ENCODE measurements at regions of chr11 and their contacts with region 1.

Region 1: DNA sequence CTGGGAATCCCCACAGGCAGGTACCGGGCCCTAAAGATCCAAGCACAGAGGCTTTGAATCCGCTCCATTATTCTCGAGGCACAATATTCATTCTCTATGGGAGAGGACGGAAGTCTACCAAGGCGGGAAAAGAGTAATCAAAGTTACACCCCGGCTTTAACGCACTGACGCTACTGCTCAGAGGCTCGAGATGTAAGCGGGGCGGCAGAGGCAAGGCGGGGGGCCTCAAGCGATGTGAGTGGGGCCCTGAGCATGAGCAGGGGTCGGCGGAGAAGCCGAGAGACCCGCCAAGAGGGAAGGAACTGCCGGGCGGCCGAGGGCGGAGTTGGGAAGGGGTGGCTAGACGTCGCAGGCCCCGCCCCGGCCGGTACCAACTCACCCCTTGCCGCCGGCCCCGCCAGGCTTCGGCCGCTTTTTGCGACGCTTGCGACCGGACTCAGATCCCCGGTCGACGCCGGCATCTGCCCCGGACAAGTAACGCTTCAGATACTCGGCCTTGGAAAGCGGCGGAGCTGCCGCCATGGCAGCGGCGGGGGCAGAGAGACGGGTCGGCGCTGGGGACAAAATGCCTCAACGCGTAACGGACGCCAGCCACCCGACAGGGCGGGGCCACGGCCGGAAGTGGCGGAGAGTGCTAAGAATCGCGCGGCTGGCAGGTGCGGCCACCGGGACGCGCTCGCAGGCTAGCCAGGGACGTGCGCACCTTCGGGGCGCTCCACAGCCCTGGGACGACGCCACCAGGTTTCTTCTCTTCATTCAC is at the start of gene BUD13:
- DNase-seq: peak; percentile 94
- ATAC-seq: peak; percentile 86
- H3K4me3 ChIP-seq: peak within 1 kb of the TSS; percentile 98
- H3K27ac ChIP-seq: peak within 1 kb of the TSS; percentile 75
- H3K4me1 ChIP-seq: peaks cover 23% of the 10 kb centered on the region
- H3K27me3 ChIP-seq: no peaks in the 10 kb centered on the region
- CTCF ChIP-seq: no peak
- total RNA-seq, gene BUD13: 28.9 and 38.0 TPM in 2 replicates

Region 2: DNA sequence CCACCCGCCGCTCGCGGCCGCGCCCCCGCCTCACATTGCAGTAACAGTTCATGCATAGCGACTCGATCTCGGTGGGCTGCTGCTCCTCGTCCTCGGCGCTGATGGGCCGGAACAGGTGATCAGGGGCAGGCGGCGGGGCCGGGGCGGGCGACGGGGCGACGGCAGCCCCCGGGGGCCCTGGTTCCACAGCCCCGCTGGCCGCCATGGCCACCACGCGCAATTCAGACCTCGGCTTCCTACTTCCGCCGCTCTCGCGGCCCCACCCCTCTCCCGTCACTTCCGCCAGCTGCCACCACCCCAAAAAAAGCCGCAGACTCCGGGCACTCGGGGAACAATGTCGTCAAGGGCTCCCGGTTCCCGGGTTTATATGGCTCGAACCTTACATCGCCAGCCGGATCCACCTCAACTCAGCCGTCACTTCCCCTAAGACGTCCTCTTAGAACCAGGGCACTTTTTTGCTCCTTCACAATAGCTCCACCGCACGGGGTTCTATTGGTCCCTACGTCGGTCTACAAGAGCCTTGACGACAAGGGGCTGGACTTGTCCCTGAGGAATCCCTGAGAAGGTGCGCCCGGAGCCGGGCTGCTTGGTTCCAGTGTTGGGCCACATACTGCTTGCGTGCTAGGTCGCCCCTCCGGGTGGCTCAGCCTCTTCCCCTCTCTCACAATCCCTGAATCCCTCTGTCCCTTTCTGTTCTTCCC is 15.3 kb after region 1 on chr11 and contains the start of gene ZPR1:
- CTCF ChIA-PET with region 1: no interaction called
- POLR2A ChIA-PET with region 1: no interaction called
- intact Hi-C with region 1: loop called (anchors 1 kb)
- DNase-seq: peak; percentile 64
- ATAC-seq: peak; percentile 81
- H3K4me3 ChIP-seq: peak within 1 kb of the TSS; percentile 83
- H3K27ac ChIP-seq: peak within 1 kb of the TSS; percentile 11; the same call in 1 of the 2 replicates
- H3K4me1 ChIP-seq: peaks cover 37% of the 10 kb centered on the region
- H3K27me3 ChIP-seq: no peaks in the 10 kb centered on the region
- CTCF ChIP-seq: no peak
- total RNA-seq, gene ZPR1: 86.5 and 89.5 TPM in 2 replicates

Region 3: DNA sequence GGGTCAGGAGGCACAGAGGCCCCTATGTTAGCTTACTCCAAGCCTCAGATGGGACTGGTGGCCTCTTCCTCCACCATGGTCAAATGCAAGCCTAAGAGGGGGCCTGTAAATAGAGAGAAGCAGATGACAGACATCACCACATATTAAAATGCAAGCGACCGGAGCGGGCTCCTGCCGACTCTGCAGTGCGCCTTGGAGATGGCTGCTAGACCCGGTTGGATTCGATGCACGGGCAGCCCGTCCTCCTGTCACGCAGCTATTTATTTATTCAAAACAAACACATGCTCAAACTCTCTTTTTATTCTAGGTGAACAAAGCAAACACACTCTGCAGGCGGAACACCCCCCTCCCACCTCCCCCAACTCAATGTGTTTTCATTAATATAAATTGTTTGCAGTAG is 816.4 kb after region 1 on chr11:
- CTCF ChIA-PET with region 1: no interaction called
- POLR2A ChIA-PET with region 1: no interaction called
- intact Hi-C with region 1: no loop called
- DNase-seq: no peak
- ATAC-seq: no peak
- H3K4me3 ChIP-seq: no peak overlapping the region
- H3K27ac ChIP-seq: no peak overlapping the region
- H3K4me1 ChIP-seq: no peaks in the 10 kb centered on the region
- H3K27me3 ChIP-seq: peaks cover 95% of the 10 kb centered on the region
- CTCF ChIP-seq: no peak